ENCODE measurements at regions of chr7 and their contacts with region 1.

Region 1: GRCh38 chr7:128883622-128884501 is 21.2 kb downstream of the ATP6V1F start:
- DNase-seq: peak; percentile 75 to 89 (median 84)
- H3K4me3 ChIP-seq: no peak overlapping the region
- H3K27ac ChIP-seq: no peak overlapping the region
- H3K27me3 ChIP-seq: peaks cover 0 to 24% (median 0%) of the 10 kb centered on the region in 45 donors
- CTCF ChIP-seq: peak; percentile 80 to 98 (median 93)

Region 2: GRCh38 chr7:128530855-128531104 is 353.1 kb before region 1 on chr7:
- intact Hi-C with region 1: loop called in 1 of 2 experiments (anchors 10 kb)
- DNase-seq: peak in 1 of 10 donors; percentile 32
- H3K4me3 ChIP-seq: peak overlapping the region; percentile 29 to 86 (median 74)
- H3K27ac ChIP-seq: peak overlapping the region in 57 of 59 donors; percentile 65 to 99 (median 95)
- H3K27me3 ChIP-seq: no peaks in the 10 kb centered on the region
- CTCF ChIP-seq: no peak

Region 3: GRCh38 chr7:128672912-128673517 is 210.8 kb before region 1 on chr7:
- intact Hi-C with region 1: loop called in 1 of 2 experiments (anchors 5 kb)
- DNase-seq: peak in 1 of 10 donors; percentile 17
- H3K4me3 ChIP-seq: no peak overlapping the region
- H3K27ac ChIP-seq: no peak overlapping the region
- H3K27me3 ChIP-seq: no peaks in the 10 kb centered on the region
- CTCF ChIP-seq: peak in 45 of 56 donors; percentile 13 to 57 (median 34)

Region 4: GRCh38 chr7:128997181-128997580 is 113.3 kb after region 1 on chr7:
- intact Hi-C with region 1: no loop called
- DNase-seq: no peak
- H3K4me3 ChIP-seq: no peak overlapping the region
- H3K27ac ChIP-seq: no peak overlapping the region
- H3K27me3 ChIP-seq: no peaks in the 10 kb centered on the region
- CTCF ChIP-seq: no peak